ENCODE measurements at regions of chr2 and their contacts with region 1.

Region 1: DNA sequence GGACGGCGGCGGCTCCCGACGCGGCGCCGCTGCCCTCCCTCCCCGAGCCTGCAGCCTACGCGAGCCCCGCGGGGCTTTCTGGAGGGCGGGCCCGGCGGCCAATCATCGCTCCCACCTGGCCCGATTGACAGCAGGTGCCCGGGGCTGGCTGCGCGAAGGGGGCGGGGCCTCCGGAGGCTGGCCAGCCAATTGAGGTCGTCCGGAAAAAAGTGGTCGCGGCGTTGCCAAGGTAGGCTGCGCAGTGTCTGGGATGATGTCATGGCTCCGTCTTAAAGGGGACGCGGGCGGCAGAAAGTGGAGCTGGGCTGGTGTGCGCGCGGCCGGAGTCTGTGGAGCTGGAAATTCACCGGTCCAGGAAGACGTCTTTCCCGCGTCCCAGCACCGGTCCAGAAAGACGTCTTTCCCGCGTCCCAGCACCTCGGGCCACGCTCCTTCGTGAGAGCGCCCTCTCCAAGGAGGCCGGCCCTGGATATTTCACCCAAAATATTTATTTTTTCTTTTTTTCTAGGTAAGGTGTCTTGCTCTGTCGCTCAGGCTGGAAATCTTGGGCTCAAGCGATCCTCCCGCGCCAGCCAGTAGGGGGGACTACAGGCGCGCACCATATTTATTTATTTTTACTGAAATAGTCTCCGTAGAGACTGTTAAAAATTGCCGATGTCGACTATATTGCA is at the start of gene ACTR1B:
- DNase-seq: peak; percentile 99
- ATAC-seq: peak; percentile 91
- H3K4me3 ChIP-seq: peak within 1 kb of the TSS; percentile 71 to 96 (median 84)
- H3K4me3 Mint-ChIP-seq: peak within 1 kb of the TSS; percentile 96
- H3K27ac ChIP-seq: peak within 1 kb of the TSS; percentile 82 to 97
- H3K27ac Mint-ChIP-seq: peak within 1 kb of the TSS; percentile 97
- H3K4me1 ChIP-seq: peaks cover 23 to 32% of the 10 kb centered on the region in 2 donors
- H3K4me1 Mint-ChIP-seq: peaks cover 33% of the 10 kb centered on the region
- H3K27me3 ChIP-seq: no peaks in the 10 kb centered on the region
- H3K27me3 Mint-ChIP-seq: no peaks in the 10 kb centered on the region
- CTCF ChIP-seq: peak; percentile 72
- total RNA-seq, gene ACTR1B: 69.0 and 70.2 TPM in 2 replicates

Region 2: GRCh38 chr2:97645695-97646629 is 18.1 kb before region 1 on chr2 and contains the start of gene COX5B:
- CTCF ChIA-PET with region 1: interaction called, 34 read pairs
- POLR2A ChIA-PET with region 1: interaction called, 44 read pairs
- intact Hi-C with region 1: loop called (anchors 1 kb)
- DNase-seq: peak; percentile 98
- ATAC-seq: peak; percentile 98
- H3K4me3 ChIP-seq: peak within 1 kb of the TSS; percentile 61 to 97 (median 97)
- H3K4me3 Mint-ChIP-seq: peak within 1 kb of the TSS; percentile 100
- H3K27ac ChIP-seq: peak within 1 kb of the TSS; percentile 72 to 87
- H3K27ac Mint-ChIP-seq: peak within 1 kb of the TSS; percentile 97
- H3K4me1 ChIP-seq: peaks cover 14 to 15% of the 10 kb centered on the region in 2 donors
- H3K4me1 Mint-ChIP-seq: peaks cover 21% of the 10 kb centered on the region
- H3K27me3 ChIP-seq: no peaks in the 10 kb centered on the region
- H3K27me3 Mint-ChIP-seq: peaks cover 3% of the 10 kb centered on the region
- CTCF ChIP-seq: no peak
- total RNA-seq, gene COX5B: 104 and 111 TPM in 2 replicates

Region 3: GRCh38 chr2:97675430-97676113 is 11.5 kb after region 1 on chr2:
- CTCF ChIA-PET with region 1: interaction called, 5 read pairs
- POLR2A ChIA-PET with region 1: interaction called, 12 read pairs
- intact Hi-C with region 1: no loop called
- DNase-seq: no peak
- ATAC-seq: no peak
- H3K4me3 ChIP-seq: no peak overlapping the region
- H3K4me3 Mint-ChIP-seq: no peak overlapping the region
- H3K27ac ChIP-seq: no peak overlapping the region
- H3K27ac Mint-ChIP-seq: no peak overlapping the region
- H3K4me1 ChIP-seq: peaks cover 0 to 5% of the 10 kb centered on the region in 2 donors
- H3K4me1 Mint-ChIP-seq: peaks cover 2% of the 10 kb centered on the region
- H3K27me3 ChIP-seq: no peaks in the 10 kb centered on the region
- H3K27me3 Mint-ChIP-seq: no peaks in the 10 kb centered on the region
- CTCF ChIP-seq: no peak

Region 4: GRCh38 chr2:97788986-97789644 is 125.0 kb after region 1 on chr2:
- CTCF ChIA-PET with region 1: no interaction called
- POLR2A ChIA-PET with region 1: no interaction called
- intact Hi-C with region 1: no loop called
- DNase-seq: no peak
- ATAC-seq: no peak
- H3K4me3 ChIP-seq: no peak overlapping the region
- H3K4me3 Mint-ChIP-seq: no peak overlapping the region
- H3K27ac ChIP-seq: no peak overlapping the region
- H3K27ac Mint-ChIP-seq: no peak overlapping the region
- H3K4me1 ChIP-seq: no peaks in the 10 kb centered on the region
- H3K4me1 Mint-ChIP-seq: no peaks in the 10 kb centered on the region
- H3K27me3 ChIP-seq: no peaks in the 10 kb centered on the region
- H3K27me3 Mint-ChIP-seq: no peaks in the 10 kb centered on the region
- CTCF ChIP-seq: no peak

Region 5: DNA sequence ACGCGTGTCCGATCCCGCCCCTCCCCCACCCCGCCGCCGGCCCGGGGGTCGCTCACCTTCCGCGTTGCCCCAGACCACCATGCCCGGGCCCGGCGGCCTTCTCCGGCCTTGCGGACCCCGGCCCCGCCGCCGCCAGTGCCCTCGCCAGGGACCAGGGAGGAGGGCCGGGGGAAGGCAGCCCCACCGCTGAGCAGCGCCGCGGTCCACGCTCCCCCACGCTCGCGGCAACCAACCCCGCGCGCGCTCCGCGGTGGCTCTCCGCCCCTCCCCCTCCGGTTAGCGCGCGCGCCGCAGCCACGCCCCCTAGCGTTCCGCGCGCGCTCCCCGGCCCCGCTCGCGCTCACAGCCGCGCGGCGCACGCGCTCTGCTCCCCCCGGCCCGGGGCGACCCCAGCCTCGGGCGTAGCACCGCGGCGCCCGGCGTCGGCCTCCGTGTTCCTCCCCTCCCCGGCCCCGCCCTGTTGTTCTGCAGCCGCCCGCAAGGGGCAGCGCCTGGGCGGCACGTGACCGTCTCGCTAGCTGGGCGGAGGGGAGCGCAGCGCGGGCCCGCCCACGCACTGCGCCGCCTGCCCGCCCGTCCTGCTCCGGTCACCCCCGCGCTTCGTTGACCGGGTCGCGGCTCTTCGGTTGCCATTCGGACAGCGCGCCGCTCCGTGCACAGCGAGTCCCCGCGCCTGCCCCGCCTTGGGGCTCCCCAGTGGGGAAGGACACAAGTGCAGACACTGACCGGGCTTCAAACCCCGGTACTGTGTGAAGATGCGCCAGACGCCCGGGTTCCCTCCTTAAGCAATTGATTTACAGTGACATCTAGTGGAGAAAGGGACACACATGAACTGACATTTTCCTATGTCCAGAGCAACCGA is 1825.9 kb after region 1 on chr2 and contains the start of gene REV1:
- CTCF ChIA-PET with region 1: no interaction called
- POLR2A ChIA-PET with region 1: no interaction called
- intact Hi-C with region 1: loop called (anchors 5 kb)
- DNase-seq: peak; percentile 99
- ATAC-seq: peak; percentile 85
- H3K4me3 ChIP-seq: peak within 1 kb of the TSS; percentile 58 to 81 (median 80)
- H3K4me3 Mint-ChIP-seq: peak within 1 kb of the TSS; percentile 99
- H3K27ac ChIP-seq: peak within 1 kb of the TSS; percentile 79 to 80
- H3K27ac Mint-ChIP-seq: peak within 1 kb of the TSS; percentile 99
- H3K4me1 ChIP-seq: peaks cover 10 to 27% of the 10 kb centered on the region in 2 donors
- H3K4me1 Mint-ChIP-seq: peaks cover 29% of the 10 kb centered on the region
- H3K27me3 ChIP-seq: no peaks in the 10 kb centered on the region
- H3K27me3 Mint-ChIP-seq: peaks cover 12% of the 10 kb centered on the region
- CTCF ChIP-seq: peak; percentile 83
- total RNA-seq, gene REV1: 69.5 and 70.5 TPM in 2 replicates

Measured in B cell (primary cell).